Aorta (tissue), 5 donors: ENCODE measurements at regions of chr10 and their contacts with region 1.

Region 1: GRCh38 chr10:26269754-26270153 is 53.2 kb downstream of the GAD2 start:
- DNase-seq: no peak
- ATAC-seq: no peak
- H3K4me3 ChIP-seq: no peak overlapping the region
- H3K27ac ChIP-seq: no peak overlapping the region
- H3K4me1 ChIP-seq: no peaks in the 10 kb centered on the region
- H3K27me3 ChIP-seq: no peaks in the 10 kb centered on the region

Region 2: GRCh38 chr10:25875556-25876165 is 394.1 kb before region 1 on chr10:
- intact Hi-C with region 1: loop called (anchors 2 to 5 kb)
- DNase-seq: peak; percentile 72 to 85
- ATAC-seq: peak; percentile 84
- H3K4me3 ChIP-seq: no peak overlapping the region
- H3K27ac ChIP-seq: no peak overlapping the region
- H3K4me1 ChIP-seq: no peaks in the 10 kb centered on the region
- H3K27me3 ChIP-seq: no peaks in the 10 kb centered on the region